Activated CD4-positive, alpha-beta T cell treated with anti-CD3 and anti-CD28 coated beads for 36 hours (primary cell): ENCODE measurements at regions of chr9 and their contacts with region 1.

Region 1: DNA sequence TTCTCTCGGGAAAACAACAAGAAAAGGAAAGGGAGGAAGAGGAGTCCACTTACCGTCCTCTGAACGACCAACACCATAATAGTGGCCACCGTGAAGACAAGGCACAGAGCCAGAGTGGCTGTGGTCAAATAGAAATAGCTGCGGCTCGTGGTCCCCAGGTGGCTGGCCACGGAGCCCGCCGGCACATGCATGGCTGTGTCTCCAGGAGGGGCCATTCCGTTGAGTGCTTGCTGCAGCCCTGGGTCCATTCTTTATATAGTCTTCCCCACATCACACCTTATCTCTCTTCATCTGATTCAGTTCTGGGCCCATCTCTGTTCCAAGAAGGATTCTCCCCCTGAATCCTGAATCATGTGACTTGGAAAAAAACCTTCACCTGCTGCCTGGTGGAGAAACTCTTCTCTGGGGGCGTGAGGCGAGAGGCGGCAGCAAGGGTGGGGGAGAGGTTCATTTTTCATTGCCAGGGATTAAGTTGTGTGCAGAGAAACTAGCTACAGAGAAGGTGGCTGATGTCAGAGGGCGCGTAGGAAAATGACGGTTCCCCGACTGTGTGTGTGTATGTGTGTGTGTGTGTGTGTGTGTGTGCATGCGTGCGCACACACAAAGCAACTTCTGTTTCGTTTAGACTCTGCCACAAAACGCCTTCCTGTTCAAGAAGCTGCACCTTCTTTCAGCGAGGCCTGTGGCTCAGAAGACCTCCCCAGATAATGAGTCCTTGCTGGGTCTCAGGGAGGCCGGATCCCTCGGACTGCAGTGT is at the start of gene TNFSF8:
- DNase-seq: peak; percentile 90
- ATAC-seq: peak; percentile 85
- H3K4me3 Mint-ChIP-seq: peak within 1 kb of the TSS; percentile 85
- H3K27ac Mint-ChIP-seq: peak within 1 kb of the TSS; percentile 98
- H3K4me1 Mint-ChIP-seq: peaks cover 49% of the 10 kb centered on the region
- H3K27me3 Mint-ChIP-seq: no peaks in the 10 kb centered on the region
- total RNA-seq, gene TNFSF8: 42.3 to 48.2 TPM

Region 2: GRCh38 chr9:114574438-114574837 is 355.8 kb before region 1 on chr9:
- CTCF ChIA-PET with region 1: no interaction called
- POLR2A ChIA-PET with region 1: no interaction called
- intact Hi-C with region 1: no loop called
- DNase-seq: no peak
- ATAC-seq: no peak
- H3K4me3 Mint-ChIP-seq: no peak overlapping the region
- H3K27ac Mint-ChIP-seq: no peak overlapping the region
- H3K4me1 Mint-ChIP-seq: no peaks in the 10 kb centered on the region
- H3K27me3 Mint-ChIP-seq: no peaks in the 10 kb centered on the region

Region 3: GRCh38 chr9:114681594-114682332 is 248.5 kb before region 1 on chr9 and contains the start of gene TEX48:
- CTCF ChIA-PET with region 1: interaction called, 8 read pairs
- POLR2A ChIA-PET with region 1: no interaction called
- intact Hi-C with region 1: loop called in 1 of 2 experiments (anchors 1 kb)
- DNase-seq: peak; percentile 91
- ATAC-seq: peak; percentile 87
- H3K4me3 Mint-ChIP-seq: peak within 1 kb of the TSS; percentile 39
- H3K27ac Mint-ChIP-seq: peak within 1 kb of the TSS; percentile 86
- H3K4me1 Mint-ChIP-seq: peaks cover 56% of the 10 kb centered on the region
- H3K27me3 Mint-ChIP-seq: peaks cover 5% of the 10 kb centered on the region
- total RNA-seq, gene TEX48: 0.69 to 0.75 TPM

Region 4: DNA sequence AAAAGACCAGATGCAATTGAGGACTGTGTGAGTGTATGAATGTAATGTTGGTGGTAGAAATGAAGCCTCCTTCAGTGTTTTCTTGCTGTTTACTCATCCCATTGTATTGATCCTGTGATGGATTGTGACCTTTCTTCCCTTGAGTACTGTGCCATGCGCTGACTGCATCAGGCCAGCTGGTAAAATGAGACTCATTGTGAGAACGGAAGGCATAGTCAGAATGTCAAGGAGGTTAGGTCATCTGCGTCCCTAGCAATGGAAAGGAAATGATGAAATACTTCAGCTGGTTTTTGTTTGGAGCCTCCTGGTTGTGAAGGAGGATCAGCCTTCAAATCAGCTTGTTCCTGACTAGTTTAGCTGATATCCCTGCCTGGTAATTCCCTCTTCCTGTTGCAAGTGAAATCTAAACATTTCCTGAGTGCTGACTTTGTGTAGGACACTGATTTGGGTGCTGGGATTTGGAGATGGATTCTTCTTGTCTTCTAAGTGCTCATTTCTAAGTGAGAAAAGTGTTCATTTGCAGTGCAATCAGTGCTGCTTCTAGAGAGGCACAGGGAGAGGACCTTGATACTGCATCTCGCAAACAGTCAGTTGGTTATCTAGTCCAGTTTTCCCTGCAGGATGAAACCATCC is 35.3 kb before region 1 on chr9:
- CTCF ChIA-PET with region 1: interaction called, 6 read pairs
- POLR2A ChIA-PET with region 1: no interaction called
- intact Hi-C with region 1: loop called (anchors 2 to 5 kb)
- DNase-seq: peak; percentile 77
- ATAC-seq: peak; percentile 76
- H3K4me3 Mint-ChIP-seq: peak overlapping the region; percentile 14
- H3K27ac Mint-ChIP-seq: peak overlapping the region; percentile 90
- H3K4me1 Mint-ChIP-seq: peaks cover 21% of the 10 kb centered on the region
- H3K27me3 Mint-ChIP-seq: no peaks in the 10 kb centered on the region

Region 5: GRCh38 chr9:114919611-114920010 is 10.6 kb before region 1 on chr9:
- CTCF ChIA-PET with region 1: interaction called, 13 read pairs
- POLR2A ChIA-PET with region 1: interaction called, 9 read pairs
- intact Hi-C with region 1: loop called in 1 of 2 experiments (anchors 1 kb)
- DNase-seq: peak; percentile 55
- ATAC-seq: peak; percentile 86
- H3K4me3 Mint-ChIP-seq: peak overlapping the region; percentile 3
- H3K27ac Mint-ChIP-seq: peak overlapping the region; percentile 69
- H3K4me1 Mint-ChIP-seq: peaks cover 90% of the 10 kb centered on the region
- H3K27me3 Mint-ChIP-seq: no peaks in the 10 kb centered on the region

Region 6: GRCh38 chr9:114988962-114989599 is 58.8 kb after region 1 on chr9:
- CTCF ChIA-PET with region 1: interaction called, 6 read pairs
- POLR2A ChIA-PET with region 1: interaction called, 33 read pairs
- intact Hi-C with region 1: loop called (anchors 1 kb)
- DNase-seq: peak; percentile 64
- ATAC-seq: peak; percentile 63
- H3K4me3 Mint-ChIP-seq: peak overlapping the region; percentile 19
- H3K27ac Mint-ChIP-seq: peak overlapping the region; percentile 95
- H3K4me1 Mint-ChIP-seq: peaks cover 68% of the 10 kb centered on the region
- H3K27me3 Mint-ChIP-seq: no peaks in the 10 kb centered on the region

Region 7: DNA sequence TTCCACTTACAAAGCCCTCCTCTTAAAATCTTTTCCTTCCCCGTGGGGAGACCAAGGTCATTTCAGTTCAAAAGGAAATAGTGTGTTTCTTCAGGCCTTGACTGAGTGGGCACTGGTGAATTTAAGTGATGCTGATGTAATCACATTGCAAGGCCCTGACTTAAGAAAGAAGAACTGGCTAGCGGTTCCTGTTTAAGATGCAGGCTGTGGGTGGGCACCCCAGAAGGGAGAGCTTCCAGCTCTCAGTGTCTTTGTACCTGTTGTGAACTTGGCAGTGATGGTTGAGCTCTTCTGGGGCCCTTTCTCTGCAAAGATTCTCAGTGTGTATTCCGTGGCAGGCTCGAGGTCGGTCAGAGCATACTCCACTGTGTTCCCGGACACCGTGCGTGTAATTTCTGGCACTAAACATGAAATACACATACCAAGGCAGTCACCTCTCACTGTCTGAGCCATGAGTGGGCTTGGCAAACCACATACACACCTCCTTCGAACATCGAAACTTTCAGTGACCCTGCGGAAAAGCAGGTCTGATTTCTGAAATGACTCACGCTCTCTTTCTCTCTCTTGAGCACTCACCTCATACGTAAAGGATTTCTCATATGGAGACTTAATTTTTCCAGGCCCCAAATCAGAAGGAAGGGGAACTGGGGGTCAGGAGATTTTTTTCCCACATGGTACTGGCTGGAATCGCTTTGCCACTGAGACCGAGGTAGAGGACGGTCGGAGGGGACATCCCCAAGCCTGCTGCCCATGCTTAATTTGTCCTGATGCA is 105.8 kb after region 1 on chr9:
- CTCF ChIA-PET with region 1: no interaction called
- POLR2A ChIA-PET with region 1: interaction called, 3 read pairs
- intact Hi-C with region 1: loop called in 1 of 2 experiments (anchors 1 kb)
- DNase-seq: peak; percentile 71
- ATAC-seq: peak; percentile 87
- H3K4me3 Mint-ChIP-seq: peak overlapping the region; percentile 1
- H3K27ac Mint-ChIP-seq: peak overlapping the region; percentile 84
- H3K4me1 Mint-ChIP-seq: peaks cover 24% of the 10 kb centered on the region
- H3K27me3 Mint-ChIP-seq: peaks cover 7% of the 10 kb centered on the region